Calu3 (cell line): ENCODE measurements at regions of chr12 and their contacts with region 1.

Region 1: GRCh38 chr12:42144408-42145196 is at the start of gene GXYLT1:
- DNase-seq: peak; percentile 87
- H3K4me3 Mint-ChIP-seq: peak within 1 kb of the TSS; percentile 94
- H3K27ac Mint-ChIP-seq: peak within 1 kb of the TSS; percentile 93
- H3K4me1 Mint-ChIP-seq: peaks cover 36% of the 10 kb centered on the region
- H3K27me3 Mint-ChIP-seq: no peaks in the 10 kb centered on the region
- CTCF ChIP-seq: no peak
- total RNA-seq, gene GXYLT1: 9.7 and 10.4 TPM in 2 replicates

Region 2: DNA sequence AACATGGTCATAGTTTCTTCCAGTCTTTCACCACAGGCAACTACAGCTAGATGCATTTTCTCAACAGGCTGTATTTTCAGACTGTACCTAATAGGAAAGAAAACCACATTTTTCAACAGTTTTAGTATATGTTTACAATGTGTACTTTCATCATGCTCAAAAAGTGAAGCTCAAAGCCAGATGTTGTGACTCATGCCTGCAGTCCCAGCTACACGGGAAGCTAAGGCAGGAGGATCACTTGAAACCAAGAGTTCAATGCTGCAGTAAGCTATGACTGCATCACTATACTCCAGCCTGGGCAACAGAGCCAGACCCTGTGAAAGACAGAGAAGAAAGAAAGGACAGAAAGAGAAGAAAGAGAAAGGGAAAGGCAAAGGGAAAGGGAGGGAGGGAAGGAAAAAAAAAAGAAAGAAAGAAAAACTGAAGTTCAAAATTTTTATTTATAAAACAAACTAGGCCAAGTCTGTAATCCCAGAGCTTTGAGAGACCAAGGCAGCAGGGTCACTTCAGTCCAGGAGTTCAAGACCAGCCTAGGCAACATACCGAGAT is 25.4 kb before region 1 on chr12:
- CTCF ChIA-PET with region 1: no interaction called
- intact Hi-C with region 1: no loop called
- DNase-seq: no peak
- H3K4me3 Mint-ChIP-seq: no peak overlapping the region
- H3K27ac Mint-ChIP-seq: peak overlapping the region; percentile 7
- H3K4me1 Mint-ChIP-seq: no peaks in the 10 kb centered on the region
- H3K27me3 Mint-ChIP-seq: no peaks in the 10 kb centered on the region
- CTCF ChIP-seq: no peak

Region 3: DNA sequence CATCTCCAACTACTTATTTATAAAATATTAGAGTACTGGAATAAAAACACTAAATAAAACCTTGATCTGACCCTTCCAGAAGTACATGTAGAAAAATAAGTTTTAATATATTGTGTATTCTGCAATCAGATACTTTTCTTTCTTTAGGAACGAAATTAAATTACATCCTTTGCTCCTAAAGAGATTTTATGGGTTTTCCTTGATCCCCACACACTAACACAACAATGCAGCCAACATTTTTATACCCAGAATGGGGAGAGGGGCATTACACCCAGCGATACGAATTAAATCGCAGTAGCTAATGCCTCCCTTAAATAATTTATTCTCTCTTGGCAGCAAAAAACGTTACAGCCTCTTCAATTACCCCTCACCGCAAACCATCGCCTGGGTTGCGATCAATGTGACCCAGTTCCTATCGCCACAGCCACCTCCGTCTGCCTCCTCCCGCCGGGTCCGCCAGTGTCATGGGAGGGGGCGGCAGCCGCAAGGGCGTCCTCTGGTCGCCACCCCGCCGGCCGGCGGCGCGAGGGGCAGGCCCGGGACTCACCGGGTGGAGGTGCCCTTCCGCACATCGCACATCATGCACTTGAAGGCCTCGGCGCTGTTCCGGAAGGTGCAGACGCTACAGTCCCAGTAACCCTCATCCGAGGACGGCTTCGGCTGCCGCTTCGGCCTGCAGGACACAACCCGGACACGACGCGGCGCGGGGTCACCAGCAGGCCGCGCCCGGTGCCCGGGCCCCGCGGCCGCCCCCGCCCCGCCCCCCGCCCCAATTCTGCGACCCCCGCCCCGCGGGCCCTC is 92.7 kb after region 1 on chr12:
- CTCF ChIA-PET with region 1: no interaction called
- intact Hi-C with region 1: loop called (anchors 10 kb)
- DNase-seq: peak; percentile 66
- H3K4me3 Mint-ChIP-seq: peak overlapping the region; percentile 92
- H3K27ac Mint-ChIP-seq: no peak overlapping the region
- H3K4me1 Mint-ChIP-seq: peaks cover 9% of the 10 kb centered on the region
- H3K27me3 Mint-ChIP-seq: no peaks in the 10 kb centered on the region
- CTCF ChIP-seq: no peak

Region 4: GRCh38 chr12:42325653-42326474 is 181.3 kb after region 1 on chr12 and contains the starts of genes PPHLN1 and ZCRB1:
- CTCF ChIA-PET with region 1: no interaction called
- intact Hi-C with region 1: loop called (anchors 5 kb)
- DNase-seq: peak; percentile 68
- H3K4me3 Mint-ChIP-seq: peak within 1 kb of the TSS; percentile 94
- H3K27ac Mint-ChIP-seq: peak within 1 kb of the TSS; percentile 96
- H3K4me1 Mint-ChIP-seq: peaks cover 27% of the 10 kb centered on the region
- H3K27me3 Mint-ChIP-seq: no peaks in the 10 kb centered on the region
- CTCF ChIP-seq: no peak
- total RNA-seq, gene PPHLN1: 41.5 and 45.5 TPM in 2 replicates
- total RNA-seq, gene ZCRB1: 38.1 and 38.9 TPM in 2 replicates